GM12878 (cell line): ENCODE measurements at regions of chr2 and their contacts with region 1.

Region 1: GRCh38 chr2:134104754-134105153 is 149.1 kb upstream of the MGAT5 start:
- DNase-seq: no peak
- ATAC-seq: no peak
- H3K4me3 ChIP-seq: no peak overlapping the region
- H3K27ac ChIP-seq: no peak overlapping the region
- H3K4me1 ChIP-seq: no peaks in the 10 kb centered on the region
- H3K27me3 ChIP-seq: no peaks in the 10 kb centered on the region; a peak in 1 of 4 replicates
- CTCF ChIP-seq: no peak
- EP300 ChIP-seq: no peak
- POLR2A ChIP-seq: no peak
- RAD21 ChIP-seq: no peak

Region 2: DNA sequence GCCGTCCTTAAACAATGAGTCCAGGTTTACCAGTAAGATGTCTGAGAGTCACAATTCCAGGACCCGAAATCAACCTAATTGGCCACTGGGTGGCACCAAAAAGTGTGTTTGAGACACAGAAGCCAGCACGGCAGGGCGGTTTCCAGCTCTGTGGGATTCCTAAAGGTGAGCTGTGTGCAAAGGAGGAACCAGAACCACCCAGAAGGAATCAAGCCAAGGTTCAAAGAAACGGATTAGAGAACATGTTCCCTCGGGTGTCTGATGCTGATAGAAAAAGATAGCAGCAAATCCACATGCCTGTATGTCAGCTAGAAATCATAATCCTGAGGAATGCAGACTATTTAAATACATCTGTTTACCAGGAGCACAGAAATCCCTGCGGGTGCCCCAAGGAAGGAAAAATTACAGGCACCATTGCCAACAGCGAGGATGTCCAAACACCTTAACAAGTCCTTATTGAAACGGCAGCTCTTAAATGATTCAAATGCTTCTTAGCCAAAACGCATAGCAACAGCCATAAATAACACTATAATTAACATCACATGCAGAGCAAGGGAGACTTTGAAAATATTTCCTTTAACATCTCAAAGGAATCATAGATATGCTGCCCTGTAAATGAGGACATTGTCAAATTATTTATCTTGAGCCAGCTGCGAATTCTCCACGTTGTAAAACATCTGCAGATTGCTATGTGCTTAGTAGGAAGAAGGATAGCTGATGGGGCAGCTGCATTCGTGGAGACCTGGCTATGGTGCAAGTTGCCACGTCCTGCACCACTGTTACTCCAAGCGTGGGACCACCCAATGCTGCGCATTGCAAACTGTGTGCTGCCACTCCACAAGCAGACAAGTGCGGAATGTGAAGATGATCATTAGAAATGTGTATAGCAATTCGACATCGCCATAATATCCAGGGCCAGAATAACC is 217.8 kb before region 1 on chr2:
- CTCF ChIA-PET with region 1: interaction called, 6 read pairs
- POLR2A ChIA-PET with region 1: no interaction called
- RAD21 ChIA-PET with region 1: interaction called, 3 read pairs
- SMC1A ChIA-PET with region 1: no interaction called
- in situ Hi-C with region 1: no loop called
- intact Hi-C with region 1: loop called (anchors 5 kb)
- DNase-seq: peak; percentile 21
- ATAC-seq: peak; percentile 94
- H3K4me3 ChIP-seq: no peak overlapping the region
- H3K27ac ChIP-seq: no peak overlapping the region
- H3K4me1 ChIP-seq: no peaks in the 10 kb centered on the region
- H3K27me3 ChIP-seq: no peaks in the 10 kb centered on the region; a peak in 2 of 4 replicates
- CTCF ChIP-seq: peak; percentile 57 to 76 (median 70); a peak in 5 of 6 replicates
- EP300 ChIP-seq: no peak
- POLR2A ChIP-seq: no peak
- RAD21 ChIP-seq: peak; percentile 84

Region 3: GRCh38 chr2:134405611-134406081 is 300.9 kb after region 1 on chr2:
- CTCF ChIA-PET with region 1: no interaction called
- POLR2A ChIA-PET with region 1: no interaction called
- RAD21 ChIA-PET with region 1: no interaction called
- SMC1A ChIA-PET with region 1: no interaction called
- in situ Hi-C with region 1: no loop called
- intact Hi-C with region 1: no loop called
- DNase-seq: no peak
- ATAC-seq: no peak
- H3K4me3 ChIP-seq: no peak overlapping the region
- H3K27ac ChIP-seq: no peak overlapping the region
- H3K4me1 ChIP-seq: peaks cover 17% of the 10 kb centered on the region
- H3K27me3 ChIP-seq: no peaks in the 10 kb centered on the region
- CTCF ChIP-seq: no peak
- EP300 ChIP-seq: no peak
- POLR2A ChIP-seq: no peak
- RAD21 ChIP-seq: no peak